ENCODE measurements at regions of chr17 and their contacts with region 1.

Region 1: GRCh38 chr17:48175692-48176470 is 68.3 kb downstream of the SNX11 start:
- DNase-seq: no peak
- ATAC-seq: no peak
- H3K4me3 ChIP-seq: no peak overlapping the region
- H3K27ac ChIP-seq: no peak overlapping the region
- H3K4me1 ChIP-seq: no peaks in the 10 kb centered on the region
- H3K27me3 ChIP-seq: peaks cover 4% of the 10 kb centered on the region
- CTCF ChIP-seq: no peak

Region 2: GRCh38 chr17:48054238-48055185 is 121.4 kb before region 1 on chr17:
- CTCF ChIA-PET with region 1: no interaction called
- POLR2A ChIA-PET with region 1: no interaction called
- in situ Hi-C with region 1: no loop called
- intact Hi-C with region 1: no loop called
- DNase-seq: no peak
- ATAC-seq: peak; percentile 52
- H3K4me3 ChIP-seq: peak overlapping the region in 1 of 2 experiments; percentile 1; a peak in 1 of 4 replicates
- H3K27ac ChIP-seq: peak overlapping the region; percentile 78
- H3K4me1 ChIP-seq: peaks cover 59% of the 10 kb centered on the region
- H3K27me3 ChIP-seq: no peaks in the 10 kb centered on the region
- CTCF ChIP-seq: no peak

Region 3: GRCh38 chr17:48144976-48145798 is 30.7 kb before region 1 on chr17:
- CTCF ChIA-PET with region 1: no interaction called
- POLR2A ChIA-PET with region 1: interaction called, 15 read pairs
- in situ Hi-C with region 1: no loop called
- intact Hi-C with region 1: no loop called
- DNase-seq: no peak
- ATAC-seq: no peak
- H3K4me3 ChIP-seq: no peak overlapping the region
- H3K27ac ChIP-seq: no peak overlapping the region
- H3K4me1 ChIP-seq: peaks cover 8% of the 10 kb centered on the region; the same call in 1 of the 2 replicates
- H3K27me3 ChIP-seq: peaks cover 10% of the 10 kb centered on the region; the same call in 1 of the 2 replicates
- CTCF ChIP-seq: no peak

Region 4: GRCh38 chr17:48385319-48385718 is 209.4 kb after region 1 on chr17:
- CTCF ChIA-PET with region 1: interaction called, 10 read pairs
- POLR2A ChIA-PET with region 1: no interaction called
- in situ Hi-C with region 1: no loop called
- intact Hi-C with region 1: no loop called
- DNase-seq: no peak
- ATAC-seq: no peak
- H3K4me3 ChIP-seq: no peak overlapping the region
- H3K27ac ChIP-seq: no peak overlapping the region
- H3K4me1 ChIP-seq: no peaks in the 10 kb centered on the region
- H3K27me3 ChIP-seq: no peaks in the 10 kb centered on the region
- CTCF ChIP-seq: no peak